ENCODE measurements at regions of chr4 and their contacts with region 1.

Region 1: DNA sequence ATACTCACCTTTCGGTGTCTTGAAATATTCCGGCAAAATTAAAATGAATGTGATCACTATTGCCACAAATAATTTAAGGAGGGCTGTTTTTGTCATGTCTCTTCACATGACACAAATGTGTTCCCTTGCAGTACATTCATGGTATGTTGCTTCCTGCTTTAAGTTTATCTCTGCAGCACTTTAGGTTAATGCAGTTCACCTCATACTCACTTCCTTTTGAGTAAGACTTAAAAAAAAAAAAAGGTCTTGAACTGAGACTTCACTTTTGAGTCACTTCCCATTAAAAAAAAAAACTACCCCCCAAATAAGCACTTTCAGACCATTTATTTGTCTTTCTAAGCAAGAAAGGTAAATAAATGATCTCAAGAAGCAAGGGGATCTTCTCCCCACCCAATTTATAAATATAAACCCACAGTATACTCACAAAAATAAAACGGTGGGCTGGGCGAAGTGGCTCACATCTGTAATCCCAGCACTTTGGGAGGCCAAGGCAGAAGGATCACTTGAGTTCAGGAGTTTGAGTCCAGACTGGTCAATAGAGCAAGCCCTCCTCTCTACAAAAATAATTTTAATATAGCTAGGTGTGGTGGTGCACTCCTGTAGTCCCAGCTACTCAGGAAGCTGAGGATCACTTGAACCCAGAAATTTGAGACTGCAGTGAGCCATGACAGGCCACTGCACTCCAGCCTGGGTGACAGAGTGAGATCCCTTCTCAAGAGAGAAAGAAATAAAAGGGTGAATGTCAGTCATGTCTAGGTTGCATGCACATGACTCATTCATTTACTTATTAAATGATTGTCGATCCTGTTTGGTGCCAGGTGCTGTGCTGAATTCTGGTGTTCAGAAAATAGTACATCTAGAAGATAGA is at the start of gene TMEM156:
- DNase-seq: peak; percentile 88
- H3K4me3 ChIP-seq: peak within 1 kb of the TSS; percentile 79
- H3K27ac ChIP-seq: peak within 1 kb of the TSS; percentile 91
- H3K4me1 ChIP-seq: peaks cover 67% of the 10 kb centered on the region
- CTCF ChIP-seq: no peak
- total RNA-seq, gene TMEM156: 25.0 and 29.0 TPM in 2 replicates

Region 2: GRCh38 chr4:38230121-38230801 is 802.2 kb before region 1 on chr4:
- CTCF ChIA-PET with region 1: no interaction called
- POLR2A ChIA-PET with region 1: no interaction called
- intact Hi-C with region 1: no loop called
- DNase-seq: no peak
- H3K4me3 ChIP-seq: no peak overlapping the region
- H3K27ac ChIP-seq: no peak overlapping the region
- H3K4me1 ChIP-seq: no peaks in the 10 kb centered on the region
- CTCF ChIP-seq: no peak

Region 3: DNA sequence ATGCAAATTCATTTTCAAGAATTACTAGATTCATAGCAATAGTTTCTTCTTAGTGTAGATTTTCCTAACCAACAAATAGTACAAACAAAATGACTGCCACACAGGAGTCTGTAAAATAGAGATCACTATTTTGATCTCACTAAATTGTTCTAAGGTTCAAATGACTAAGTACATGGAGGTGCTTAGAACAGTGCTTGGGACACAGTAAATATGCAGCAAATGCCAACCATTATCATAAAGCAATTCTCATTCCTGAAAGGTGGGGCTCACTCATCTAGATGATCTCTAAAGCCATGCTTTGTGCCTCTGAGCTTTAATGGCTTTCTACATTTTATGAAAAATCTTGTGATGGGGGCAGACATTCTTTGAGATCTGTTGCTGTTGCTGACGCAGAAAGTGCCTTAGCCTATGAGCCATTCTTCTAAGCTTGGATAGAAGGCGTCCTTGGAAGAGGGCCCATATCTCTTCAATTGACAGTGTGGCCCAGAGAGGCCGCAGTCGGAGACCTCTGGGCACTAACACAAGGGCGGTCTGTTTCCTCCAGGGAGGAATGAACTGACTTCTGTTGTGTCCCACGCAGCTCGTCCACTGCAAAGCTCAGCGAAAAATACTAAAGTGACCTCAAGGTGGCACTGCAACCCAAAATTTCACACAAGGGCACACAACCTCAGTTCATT is 273.2 kb before region 1 on chr4:
- CTCF ChIA-PET with region 1: no interaction called
- POLR2A ChIA-PET with region 1: interaction called, 6 read pairs
- intact Hi-C with region 1: loop called (anchors 5 kb)
- DNase-seq: peak; percentile 83
- H3K4me3 ChIP-seq: peak overlapping the region; percentile 18
- H3K27ac ChIP-seq: peak overlapping the region; percentile 99
- H3K4me1 ChIP-seq: peaks cover 63% of the 10 kb centered on the region
- CTCF ChIP-seq: peak; percentile 95

Region 4: GRCh38 chr4:39044364-39044955 is 12.0 kb after region 1 on chr4:
- CTCF ChIA-PET with region 1: interaction called, 6 read pairs
- POLR2A ChIA-PET with region 1: interaction called, 169 read pairs
- intact Hi-C with region 1: loop called (anchors 1 kb)
- DNase-seq: peak; percentile 90
- H3K4me3 ChIP-seq: peak overlapping the region; percentile 75
- H3K27ac ChIP-seq: peak overlapping the region; percentile 60
- H3K4me1 ChIP-seq: peaks cover 57% of the 10 kb centered on the region
- CTCF ChIP-seq: no peak

Region 5: DNA sequence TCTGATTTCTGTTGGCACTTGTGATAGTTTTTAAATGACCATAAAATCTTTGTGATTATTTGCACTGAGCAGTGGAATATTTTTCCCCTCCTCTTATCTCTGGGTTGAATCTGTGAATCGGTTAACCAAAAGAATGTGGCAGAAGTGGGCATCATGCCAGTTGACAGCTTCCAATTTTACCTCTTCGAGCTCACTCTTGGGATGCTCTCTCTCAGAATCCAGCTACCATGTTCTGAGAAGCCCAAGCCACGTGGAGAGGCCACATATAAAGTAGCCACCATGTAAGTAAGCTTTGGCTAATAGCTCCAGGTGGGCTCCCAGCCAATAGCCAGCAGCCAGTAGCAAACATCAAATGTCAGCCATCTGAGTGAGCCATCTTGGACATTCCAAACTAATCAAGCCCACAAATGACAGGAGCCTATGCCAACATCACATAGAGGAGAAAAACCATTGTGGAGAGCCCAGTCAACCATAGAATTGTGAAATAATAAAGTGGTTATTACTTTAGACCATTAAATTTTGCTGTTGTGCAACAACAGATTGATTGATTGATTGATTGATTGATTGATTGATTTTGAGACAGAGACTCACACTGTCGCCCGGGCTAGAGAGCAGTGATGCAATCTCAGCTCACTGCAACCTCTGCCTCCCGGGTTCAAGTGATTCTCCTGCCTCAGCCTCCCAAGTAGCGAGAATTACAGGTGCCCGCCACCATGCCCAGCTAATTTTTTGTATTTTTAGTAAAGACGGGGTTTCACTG is 137.2 kb after region 1 on chr4:
- CTCF ChIA-PET with region 1: no interaction called
- POLR2A ChIA-PET with region 1: interaction called, 7 read pairs
- intact Hi-C with region 1: loop called (anchors 2 kb)
- DNase-seq: no peak
- H3K4me3 ChIP-seq: no peak overlapping the region
- H3K27ac ChIP-seq: no peak overlapping the region
- H3K4me1 ChIP-seq: peaks cover 50% of the 10 kb centered on the region
- CTCF ChIP-seq: no peak

Region 6: GRCh38 chr4:39237179-39237578 is 204.7 kb after region 1 on chr4:
- CTCF ChIA-PET with region 1: no interaction called
- POLR2A ChIA-PET with region 1: no interaction called
- intact Hi-C with region 1: no loop called
- DNase-seq: no peak
- H3K4me3 ChIP-seq: no peak overlapping the region
- H3K27ac ChIP-seq: no peak overlapping the region
- H3K4me1 ChIP-seq: no peaks in the 10 kb centered on the region
- CTCF ChIP-seq: no peak

Region 7: DNA sequence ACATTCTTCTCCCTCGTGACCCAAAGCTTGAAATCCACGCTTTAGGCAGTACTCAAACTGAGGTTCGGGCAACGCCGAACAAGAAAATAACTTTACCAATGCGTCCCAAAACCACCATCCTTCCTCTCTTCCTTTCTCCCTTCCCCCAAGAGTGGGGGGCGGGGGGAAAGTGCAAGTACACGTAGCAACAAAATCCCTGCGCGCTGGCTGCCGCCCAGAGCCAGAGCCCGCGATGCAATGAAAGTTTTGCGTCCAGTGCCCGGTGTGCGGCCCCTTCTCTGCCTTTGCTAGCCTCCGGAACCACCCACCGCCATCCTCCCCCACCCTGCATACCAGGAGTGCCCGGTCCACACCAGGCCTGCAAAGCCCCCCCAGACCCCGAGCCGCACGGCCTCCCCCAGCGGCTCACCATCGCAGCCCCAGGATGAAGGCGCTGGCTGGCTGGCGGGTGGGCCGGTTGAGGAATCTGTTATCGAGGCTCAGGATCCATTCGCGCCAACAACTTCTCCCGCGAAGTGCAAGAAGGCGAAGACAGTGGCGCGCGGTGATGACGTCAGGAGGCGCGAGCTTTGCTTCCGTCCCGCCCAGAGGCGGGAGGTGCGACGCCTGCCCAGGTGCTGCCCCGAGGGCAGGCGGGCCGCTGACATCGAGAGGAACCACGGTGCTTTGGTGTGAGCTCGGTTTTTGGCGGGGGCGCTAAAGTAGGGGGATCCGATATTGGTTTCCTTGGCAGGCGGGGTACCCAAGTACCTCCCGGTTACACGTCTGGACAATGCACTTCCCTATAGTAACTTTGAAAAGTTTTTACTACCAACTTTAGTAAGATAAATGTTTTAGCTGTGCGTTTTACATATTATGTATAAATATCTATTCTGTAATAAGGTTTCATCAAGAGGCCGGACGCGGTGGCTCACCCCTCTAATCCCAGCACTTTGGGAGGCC is 333.6 kb after region 1 on chr4 and contains the start of gene RFC1:
- CTCF ChIA-PET with region 1: no interaction called
- POLR2A ChIA-PET with region 1: interaction called, 4 read pairs
- intact Hi-C with region 1: loop called (anchors 5 kb)
- DNase-seq: peak; percentile 95
- H3K4me3 ChIP-seq: peak within 1 kb of the TSS; percentile 86
- H3K27ac ChIP-seq: peak within 1 kb of the TSS; percentile 79
- H3K4me1 ChIP-seq: peaks cover 41% of the 10 kb centered on the region
- CTCF ChIP-seq: no peak
- total RNA-seq, gene RFC1: 72.7 and 91.0 TPM in 2 replicates